ENCODE measurements at regions of chr13 and their contacts with region 1.

Region 1: GRCh38 chr13:51583875-51584730 is at the start of gene WDFY2:
- DNase-seq: peak; percentile 100
- H3K4me3 ChIP-seq: peak within 1 kb of the TSS; percentile 80 to 90 (median 85)
- H3K27ac ChIP-seq: peak within 1 kb of the TSS; percentile 52
- H3K4me1 ChIP-seq: peaks cover 14% of the 10 kb centered on the region
- H3K27me3 ChIP-seq: no peaks in the 10 kb centered on the region
- CTCF ChIP-seq: peak in 1 of 2 donors; percentile 17
- POLR2A ChIP-seq: no peak
- total RNA-seq, gene WDFY2: 5.5 TPM in 2 replicates

Region 2: GRCh38 chr13:51222037-51222685 is 361.9 kb before region 1 on chr13 and contains the start of gene FAM124A:
- CTCF ChIA-PET with region 1: no interaction called
- POLR2A ChIA-PET with region 1: no interaction called
- dilution Hi-C with region 1: no loop called
- intact Hi-C with region 1: loop called (anchors 5 kb)
- DNase-seq: peak; percentile 36
- H3K4me3 ChIP-seq: peak within 1 kb of the TSS; percentile 29 to 64 (median 46)
- H3K27ac ChIP-seq: no peak within 1 kb of the TSS
- H3K4me1 ChIP-seq: peaks cover 7% of the 10 kb centered on the region
- H3K27me3 ChIP-seq: no peaks in the 10 kb centered on the region
- CTCF ChIP-seq: peak in 1 of 2 donors; percentile 37
- POLR2A ChIP-seq: peak; percentile 32
- total RNA-seq, gene FAM124A: 7.4 and 9.9 TPM in 2 replicates

Region 3: DNA sequence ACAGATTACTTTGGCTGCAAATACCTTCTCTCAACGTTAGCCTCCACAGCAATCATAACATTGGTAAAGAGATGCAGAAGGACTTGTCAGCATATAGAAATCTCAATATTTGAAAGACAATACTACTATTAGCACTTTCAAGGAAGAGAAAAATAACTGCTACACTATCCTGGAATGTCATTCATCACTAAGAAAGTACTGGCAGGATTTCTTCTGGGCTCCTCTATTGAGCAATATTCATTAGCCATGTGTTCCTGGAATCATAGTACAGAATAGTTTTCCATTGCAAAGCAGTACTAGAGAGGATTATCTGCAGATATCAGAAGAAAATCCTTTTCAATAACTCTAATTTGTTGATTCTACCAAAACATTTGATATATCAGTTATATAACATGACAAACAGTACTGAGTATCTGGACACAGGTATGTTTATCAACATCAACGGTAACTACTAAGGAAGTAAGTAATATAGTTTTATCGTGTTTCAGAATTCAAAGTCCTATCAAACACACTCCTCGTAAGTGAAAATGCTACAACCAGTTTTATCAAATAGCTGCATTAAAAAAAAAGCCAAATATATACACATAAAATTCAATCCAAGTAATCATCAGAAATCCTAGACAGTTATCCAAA is 158.6 kb before region 1 on chr13:
- CTCF ChIA-PET with region 1: no interaction called
- POLR2A ChIA-PET with region 1: no interaction called
- dilution Hi-C with region 1: no loop called
- intact Hi-C with region 1: no loop called
- DNase-seq: no peak
- H3K4me3 ChIP-seq: no peak overlapping the region
- H3K27ac ChIP-seq: no peak overlapping the region
- H3K4me1 ChIP-seq: no peaks in the 10 kb centered on the region
- H3K27me3 ChIP-seq: no peaks in the 10 kb centered on the region
- CTCF ChIP-seq: no peak
- POLR2A ChIP-seq: no peak

Region 4: GRCh38 chr13:51599444-51600176 is 15.5 kb after region 1 on chr13:
- CTCF ChIA-PET with region 1: no interaction called
- POLR2A ChIA-PET with region 1: no interaction called
- dilution Hi-C with region 1: no loop called
- intact Hi-C with region 1: no loop called
- DNase-seq: no peak
- H3K4me3 ChIP-seq: no peak overlapping the region
- H3K27ac ChIP-seq: no peak overlapping the region
- H3K4me1 ChIP-seq: no peaks in the 10 kb centered on the region
- H3K27me3 ChIP-seq: no peaks in the 10 kb centered on the region
- CTCF ChIP-seq: no peak
- POLR2A ChIP-seq: no peak

Region 5: GRCh38 chr13:51645154-51645650 is 61.1 kb after region 1 on chr13:
- CTCF ChIA-PET with region 1: interaction called, 3 read pairs
- POLR2A ChIA-PET with region 1: no interaction called
- dilution Hi-C with region 1: no loop called
- intact Hi-C with region 1: loop called (anchors 1 kb)
- DNase-seq: no peak
- H3K4me3 ChIP-seq: no peak overlapping the region
- H3K27ac ChIP-seq: peak overlapping the region; percentile 87
- H3K4me1 ChIP-seq: peaks cover 28% of the 10 kb centered on the region
- H3K27me3 ChIP-seq: no peaks in the 10 kb centered on the region
- CTCF ChIP-seq: no peak
- POLR2A ChIP-seq: no peak

Region 6: DNA sequence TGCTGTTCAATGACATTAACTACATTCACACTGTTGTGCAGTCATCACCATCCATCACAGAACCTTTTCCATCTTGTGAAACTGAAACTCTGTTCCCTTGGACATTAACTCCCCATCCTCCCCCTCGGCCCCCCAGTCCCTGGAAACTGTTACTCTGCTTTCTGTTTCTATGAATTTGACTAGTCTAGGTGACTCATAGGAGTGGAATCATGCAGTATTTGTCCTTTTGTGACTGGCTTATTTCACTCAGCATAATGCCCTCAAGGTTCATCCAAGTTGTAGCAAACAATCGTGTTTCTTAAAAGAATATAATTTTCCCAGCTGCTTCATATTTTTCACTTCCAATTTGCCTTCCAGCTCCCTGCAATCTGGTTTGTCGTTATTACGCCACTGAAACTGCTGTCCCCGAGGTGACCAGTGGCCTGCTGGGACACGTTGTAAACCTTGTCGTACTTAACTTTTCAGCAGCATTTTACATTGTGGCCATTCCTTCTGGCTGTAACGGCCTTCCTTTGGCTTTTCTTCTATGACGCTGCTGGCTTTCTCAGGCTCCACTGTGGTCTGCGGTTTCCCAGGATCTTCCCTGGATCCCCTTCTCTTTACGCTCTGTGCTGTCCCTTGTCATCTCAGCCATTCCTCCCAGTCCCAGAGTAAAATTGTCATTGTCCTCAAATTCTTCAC is 145.9 kb after region 1 on chr13:
- CTCF ChIA-PET with region 1: interaction called, 5 read pairs
- POLR2A ChIA-PET with region 1: no interaction called
- dilution Hi-C with region 1: no loop called
- intact Hi-C with region 1: loop called (anchors 5 kb)
- DNase-seq: peak; percentile 71
- H3K4me3 ChIP-seq: no peak overlapping the region
- H3K27ac ChIP-seq: no peak overlapping the region
- H3K4me1 ChIP-seq: peaks cover 14% of the 10 kb centered on the region
- H3K27me3 ChIP-seq: no peaks in the 10 kb centered on the region
- CTCF ChIP-seq: no peak
- POLR2A ChIP-seq: no peak

Region 7: DNA sequence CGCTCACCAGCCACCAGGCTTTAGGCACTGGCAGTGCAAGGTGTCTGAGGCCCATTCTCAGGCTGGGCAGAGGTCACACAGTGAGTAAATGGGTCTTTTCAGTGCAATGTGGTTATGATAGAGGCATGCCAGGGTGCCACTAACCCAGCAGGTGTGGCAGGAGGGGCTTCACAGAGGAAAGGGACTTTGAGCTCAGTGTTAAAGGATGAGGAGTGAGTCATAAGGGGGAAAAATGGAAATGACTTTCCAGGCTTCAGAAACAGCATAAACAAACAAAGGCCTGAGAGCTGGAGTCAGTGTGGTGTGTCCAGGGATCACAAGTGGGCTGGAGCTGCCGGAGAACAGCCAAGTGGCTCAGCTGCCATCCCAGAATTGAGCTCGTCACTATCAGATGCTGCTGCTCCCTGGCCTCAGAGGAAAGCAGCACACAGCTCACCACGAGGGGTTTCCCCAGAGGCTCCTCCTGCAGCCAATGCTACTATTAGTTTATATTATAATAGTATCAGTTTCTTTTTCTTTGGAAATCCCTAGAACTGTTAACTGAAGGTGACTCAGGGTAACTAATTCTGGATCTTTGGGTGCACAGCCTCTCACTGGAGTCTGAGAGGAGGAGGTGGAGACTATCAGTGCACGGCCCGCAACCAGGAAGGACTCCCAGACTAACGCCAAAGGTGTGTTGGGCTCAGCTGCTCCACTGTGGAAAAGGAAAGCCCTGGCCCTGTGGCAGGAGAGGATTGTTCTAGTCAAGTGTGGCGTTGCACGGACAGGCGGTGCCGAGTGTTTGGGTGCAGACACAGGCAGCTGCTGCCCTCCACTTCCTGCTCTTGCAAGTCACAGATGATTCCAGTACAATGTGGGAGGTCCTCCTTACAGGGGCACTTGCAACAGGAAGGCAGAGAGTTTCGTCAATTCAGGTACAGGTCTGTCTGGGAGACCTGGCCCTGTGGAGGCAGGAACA is 180.4 kb after region 1 on chr13:
- CTCF ChIA-PET with region 1: interaction called, 3 read pairs
- POLR2A ChIA-PET with region 1: no interaction called
- dilution Hi-C with region 1: no loop called
- intact Hi-C with region 1: loop called (anchors 10 kb)
- DNase-seq: peak; percentile 78
- H3K4me3 ChIP-seq: no peak overlapping the region
- H3K27ac ChIP-seq: no peak overlapping the region
- H3K4me1 ChIP-seq: peaks cover 11% of the 10 kb centered on the region
- H3K27me3 ChIP-seq: no peaks in the 10 kb centered on the region
- CTCF ChIP-seq: no peak
- POLR2A ChIP-seq: no peak

Region 8: GRCh38 chr13:51803422-51804294 is 219.6 kb after region 1 on chr13 and contains the start of gene DHRS12:
- CTCF ChIA-PET with region 1: no interaction called
- POLR2A ChIA-PET with region 1: interaction called, 3 read pairs
- dilution Hi-C with region 1: no loop called
- intact Hi-C with region 1: loop called (anchors 1 kb)
- DNase-seq: peak; percentile 75
- H3K4me3 ChIP-seq: peak within 1 kb of the TSS; percentile 62 to 72 (median 71)
- H3K27ac ChIP-seq: peak within 1 kb of the TSS; percentile 92
- H3K4me1 ChIP-seq: peaks cover 35% of the 10 kb centered on the region
- H3K27me3 ChIP-seq: no peaks in the 10 kb centered on the region
- CTCF ChIP-seq: no peak
- POLR2A ChIP-seq: peak; percentile 77
- total RNA-seq, gene DHRS12: 6.4 and 8.9 TPM in 2 replicates